ENCODE measurements at regions of chr14 and their contacts with region 1.

Region 1: GRCh38 chr14:60642270-60643140 is 6.8 kb downstream of the SIX1 start:
- DNase-seq: no peak
- H3K4me3 Mint-ChIP-seq: no peak overlapping the region
- H3K27ac Mint-ChIP-seq: no peak overlapping the region
- H3K4me1 Mint-ChIP-seq: peaks cover 10% of the 10 kb centered on the region
- H3K27me3 Mint-ChIP-seq: peaks cover 92% of the 10 kb centered on the region

Region 2: DNA sequence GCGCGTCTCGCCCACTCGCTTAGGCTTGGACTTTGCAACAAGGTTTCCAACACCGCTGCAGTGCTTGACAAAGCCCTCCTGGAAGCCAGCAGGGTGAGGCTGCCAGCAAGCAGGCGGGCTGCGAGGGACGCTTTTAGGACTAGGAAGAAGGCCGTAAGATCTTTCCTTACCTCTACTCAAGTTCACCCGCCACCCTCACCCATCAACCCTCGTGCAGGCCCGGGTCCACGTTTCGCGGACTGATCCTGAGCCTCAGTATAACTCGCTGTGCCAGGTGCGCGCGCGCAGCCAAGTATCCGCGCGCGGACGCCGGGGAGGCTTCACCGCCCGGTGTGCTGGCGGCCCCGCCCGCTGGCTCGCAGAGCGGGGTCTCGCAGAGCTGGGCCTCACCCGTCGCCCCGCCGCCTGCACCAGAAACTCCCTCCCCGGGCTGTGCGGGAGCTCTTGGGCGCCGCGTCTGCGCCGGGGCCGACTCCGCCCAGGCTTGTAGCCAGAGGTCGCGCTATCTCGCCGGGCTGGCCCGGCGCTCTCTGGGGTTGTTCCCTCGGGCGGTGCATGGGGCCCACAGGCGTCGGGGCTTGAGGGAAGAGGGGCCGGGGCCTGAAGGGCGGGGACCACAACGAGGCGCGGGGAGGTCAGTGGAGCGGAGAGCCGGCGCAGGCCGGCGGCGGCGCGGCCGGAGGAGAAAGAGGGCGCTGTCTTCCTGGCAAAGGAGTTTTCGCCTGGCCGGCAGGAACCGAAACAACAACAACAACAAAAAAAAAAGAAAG is 14.4 kb after region 1 on chr14:
- intact Hi-C with region 1: loop called (anchors 2 kb)
- DNase-seq: no peak
- H3K4me3 Mint-ChIP-seq: peak overlapping the region; percentile 79
- H3K27ac Mint-ChIP-seq: no peak overlapping the region
- H3K4me1 Mint-ChIP-seq: peaks cover 28% of the 10 kb centered on the region
- H3K27me3 Mint-ChIP-seq: peaks cover 83% of the 10 kb centered on the region

Region 3: DNA sequence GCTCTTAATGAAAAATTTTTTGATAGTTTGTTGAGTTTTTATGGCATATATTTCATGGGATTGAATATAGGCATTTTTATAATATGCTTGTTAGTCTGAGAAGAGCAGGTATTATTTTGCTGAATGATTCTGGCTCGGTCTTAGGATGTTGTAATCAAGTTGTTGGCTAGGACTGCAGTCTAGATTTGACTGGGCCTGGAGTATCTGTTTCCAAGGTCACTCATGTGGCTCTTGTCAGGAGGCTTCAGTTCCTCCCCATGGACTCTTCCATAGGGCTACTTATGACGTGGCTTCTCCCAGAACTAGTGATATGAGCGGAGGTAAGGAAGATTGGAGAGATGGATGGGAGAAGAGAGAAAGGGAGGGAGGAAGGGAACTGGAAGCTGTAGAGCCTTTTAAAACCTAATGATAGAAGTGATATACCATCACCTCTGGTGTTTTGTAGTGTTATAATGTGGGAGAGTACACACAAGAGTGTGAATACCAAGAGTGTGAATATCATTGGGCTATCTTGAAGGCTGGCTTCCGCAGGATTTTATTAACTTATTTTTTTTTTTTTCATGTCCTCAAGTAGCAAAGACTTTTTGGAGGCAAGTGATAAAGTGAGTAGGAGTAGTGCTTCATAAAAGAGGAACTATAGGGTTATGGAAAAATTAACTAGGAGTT is 96.5 kb after region 1 on chr14:
- intact Hi-C with region 1: no loop called
- DNase-seq: no peak
- H3K4me3 Mint-ChIP-seq: no peak overlapping the region
- H3K27ac Mint-ChIP-seq: no peak overlapping the region
- H3K4me1 Mint-ChIP-seq: peaks cover 32% of the 10 kb centered on the region
- H3K27me3 Mint-ChIP-seq: peaks cover 3% of the 10 kb centered on the region

Region 4: DNA sequence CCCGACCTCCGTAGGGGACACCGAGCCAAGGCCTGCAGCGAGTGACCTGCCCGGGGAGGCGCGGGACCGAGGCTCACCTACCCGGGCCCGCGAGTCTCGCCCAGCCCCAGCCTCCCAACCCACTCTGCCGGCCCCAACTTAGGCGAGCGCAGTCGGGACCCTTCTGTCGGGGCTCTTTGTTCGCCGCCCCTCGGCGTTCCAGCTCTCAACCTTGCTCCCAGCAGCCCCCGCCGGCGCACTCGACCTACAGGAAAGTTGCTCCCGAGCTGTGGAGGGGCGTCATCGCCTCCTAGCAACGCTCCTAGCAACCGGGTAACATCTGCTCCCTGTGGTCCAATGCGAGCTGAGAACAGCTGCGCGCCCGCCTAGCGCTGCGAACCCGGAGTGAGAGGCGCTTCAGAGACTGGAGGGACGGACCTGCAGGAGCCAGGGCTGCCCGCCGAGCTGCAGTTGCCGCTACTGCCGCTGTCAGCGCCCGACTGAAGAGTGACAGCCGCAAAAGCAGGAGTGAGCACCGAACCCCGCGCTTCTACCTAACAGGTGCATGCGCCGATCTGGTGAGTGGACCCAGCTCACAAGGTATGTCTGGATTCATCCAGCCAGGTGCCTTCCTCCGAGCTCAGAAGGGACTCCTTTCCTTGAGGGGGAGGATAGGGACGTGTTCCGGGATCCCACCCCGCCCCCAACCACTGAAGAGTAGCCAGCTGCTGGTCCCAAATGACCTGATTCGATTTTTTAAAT is 1474.7 kb after region 1 on chr14:
- intact Hi-C with region 1: loop called (anchors 5 kb)
- DNase-seq: peak; percentile 26
- H3K4me3 Mint-ChIP-seq: peak overlapping the region; percentile 3
- H3K27ac Mint-ChIP-seq: no peak overlapping the region
- H3K4me1 Mint-ChIP-seq: no peaks in the 10 kb centered on the region
- H3K27me3 Mint-ChIP-seq: peaks cover 65% of the 10 kb centered on the region